CD8-positive, alpha-beta memory T cell (primary cell): ENCODE measurements at regions of chr22 and their contacts with region 1.

Region 1: GRCh38 chr22:37199103-37199759 is 11.2 kb upstream of the C1QTNF6 start:
- DNase-seq: peak; percentile 98 to 99 (median 99)
- H3K4me3 ChIP-seq: peak overlapping the region; percentile 82
- H3K4me3 Mint-ChIP-seq: peak overlapping the region; percentile 81 to 92 (median 84)
- H3K27ac ChIP-seq: peak overlapping the region; percentile 84
- H3K27ac Mint-ChIP-seq: peak overlapping the region; percentile 85 to 97 (median 96)
- H3K4me1 ChIP-seq: peaks cover 42% of the 10 kb centered on the region
- H3K4me1 Mint-ChIP-seq: peaks cover 33 to 51% (median 38%) of the 10 kb centered on the region in 3 donors
- H3K27me3 ChIP-seq: no peaks in the 10 kb centered on the region
- H3K27me3 Mint-ChIP-seq: no peaks in the 10 kb centered on the region

Region 2: DNA sequence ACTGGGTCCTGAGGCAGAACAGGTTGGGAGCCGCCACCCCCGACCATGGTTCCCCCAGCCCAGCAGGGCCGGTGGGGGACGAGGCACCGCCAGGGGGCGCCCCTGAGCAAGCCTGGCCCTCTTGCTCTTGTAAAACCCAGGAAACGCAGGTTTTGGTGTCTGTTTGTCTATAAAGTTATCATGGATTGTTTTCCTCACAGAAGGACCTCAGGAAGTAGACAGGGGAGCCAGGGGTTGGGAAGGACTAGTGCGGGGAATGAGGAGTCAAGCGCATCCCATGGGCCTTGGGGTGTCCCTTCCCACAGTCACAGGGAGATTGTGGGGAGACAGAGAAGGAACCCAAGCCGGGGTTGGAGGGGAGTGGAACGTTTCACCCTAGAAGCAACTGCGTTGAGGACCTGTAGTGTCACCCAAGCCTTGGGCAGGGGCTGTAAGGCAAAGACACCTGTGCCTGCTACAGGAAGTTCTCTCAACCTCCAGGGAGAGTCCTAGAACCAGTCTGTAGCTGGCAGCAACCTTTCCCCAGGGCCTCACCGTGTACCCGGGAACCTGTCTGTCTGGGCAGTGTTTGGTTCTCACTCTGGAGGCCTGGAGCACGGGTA is 121.2 kb before region 1 on chr22:
- CTCF ChIA-PET with region 1: interaction called, 36 read pairs
- POLR2A ChIA-PET with region 1: interaction called, 7 read pairs
- DNase-seq: peak; percentile 74 to 87 (median 79)
- H3K4me3 ChIP-seq: no peak overlapping the region
- H3K4me3 Mint-ChIP-seq: peak overlapping the region in 6 of 7 donors; percentile 13 to 66 (median 37)
- H3K27ac ChIP-seq: no peak overlapping the region
- H3K27ac Mint-ChIP-seq: peak overlapping the region; percentile 81 to 100 (median 98)
- H3K4me1 ChIP-seq: peaks cover 38% of the 10 kb centered on the region
- H3K4me1 Mint-ChIP-seq: peaks cover 29 to 41% (median 31%) of the 10 kb centered on the region in 3 donors
- H3K27me3 ChIP-seq: no peaks in the 10 kb centered on the region
- H3K27me3 Mint-ChIP-seq: peaks cover 3 to 10% of the 10 kb centered on the region in 2 donors

Region 3: GRCh38 chr22:37148742-37149665 is 50.2 kb before region 1 on chr22:
- CTCF ChIA-PET with region 1: interaction called, 17 read pairs
- POLR2A ChIA-PET with region 1: interaction called, 8 read pairs
- DNase-seq: no peak
- H3K4me3 ChIP-seq: peak overlapping the region; percentile 86
- H3K4me3 Mint-ChIP-seq: peak overlapping the region; percentile 88 to 97 (median 96)
- H3K27ac ChIP-seq: peak overlapping the region; percentile 88
- H3K27ac Mint-ChIP-seq: peak overlapping the region; percentile 96 to 100 (median 98)
- H3K4me1 ChIP-seq: peaks cover 67% of the 10 kb centered on the region
- H3K4me1 Mint-ChIP-seq: peaks cover 62 to 70% (median 65%) of the 10 kb centered on the region in 3 donors
- H3K27me3 ChIP-seq: no peaks in the 10 kb centered on the region
- H3K27me3 Mint-ChIP-seq: peaks cover 0 to 4% of the 10 kb centered on the region in 2 donors

Region 4: DNA sequence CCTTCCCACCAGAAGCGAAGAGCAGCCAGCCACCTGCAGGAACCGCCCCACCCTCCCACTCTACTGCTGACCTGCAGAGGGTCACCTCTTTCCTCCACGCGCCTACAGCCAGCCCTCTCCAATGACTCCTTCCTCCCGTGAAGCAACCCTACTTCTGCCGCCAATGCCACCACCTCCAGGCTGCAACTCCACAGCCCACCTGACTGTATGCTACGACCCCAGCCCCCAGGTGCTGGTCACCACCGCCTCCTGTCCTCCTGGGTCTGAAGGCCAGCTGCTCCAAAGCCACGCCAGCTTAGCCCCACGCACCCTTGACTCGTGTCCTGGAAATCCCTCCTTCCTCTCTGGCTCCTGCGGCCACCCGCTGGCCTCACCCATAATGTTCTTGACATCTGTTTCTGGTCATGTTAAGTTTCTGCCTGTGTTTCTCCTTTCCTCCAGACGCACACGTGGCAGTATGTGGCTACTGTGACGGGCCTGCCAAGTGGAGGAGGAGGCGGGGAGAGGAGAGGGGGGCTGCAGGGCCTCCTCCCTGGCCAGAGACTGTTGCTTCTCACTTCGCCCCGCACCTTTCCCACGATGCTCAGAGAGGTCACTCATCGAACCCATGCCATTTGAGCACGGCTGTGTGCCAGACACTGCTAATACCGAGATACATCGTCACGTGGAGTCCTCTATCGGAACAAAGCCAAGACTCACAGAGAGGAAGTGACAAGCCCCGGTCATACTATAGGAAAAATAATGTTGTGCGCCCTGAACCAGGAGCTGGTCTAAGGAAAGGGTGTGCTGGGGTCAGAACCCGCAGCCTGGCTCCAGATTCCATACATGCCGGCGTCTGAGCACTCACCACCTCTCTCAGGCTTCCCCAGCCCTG is 22.8 kb before region 1 on chr22:
- CTCF ChIA-PET with region 1: interaction called, 10 read pairs
- POLR2A ChIA-PET with region 1: interaction called, 6 read pairs
- DNase-seq: no peak
- H3K4me3 ChIP-seq: no peak overlapping the region
- H3K4me3 Mint-ChIP-seq: no peak overlapping the region
- H3K27ac ChIP-seq: no peak overlapping the region
- H3K27ac Mint-ChIP-seq: peak overlapping the region in 6 of 8 donors; percentile 43 to 94 (median 84)
- H3K4me1 ChIP-seq: peaks cover 6% of the 10 kb centered on the region
- H3K4me1 Mint-ChIP-seq: peaks cover 29 to 63% (median 45%) of the 10 kb centered on the region in 3 donors
- H3K27me3 ChIP-seq: no peaks in the 10 kb centered on the region
- H3K27me3 Mint-ChIP-seq: peaks cover 0 to 8% of the 10 kb centered on the region in 2 donors

Region 5: DNA sequence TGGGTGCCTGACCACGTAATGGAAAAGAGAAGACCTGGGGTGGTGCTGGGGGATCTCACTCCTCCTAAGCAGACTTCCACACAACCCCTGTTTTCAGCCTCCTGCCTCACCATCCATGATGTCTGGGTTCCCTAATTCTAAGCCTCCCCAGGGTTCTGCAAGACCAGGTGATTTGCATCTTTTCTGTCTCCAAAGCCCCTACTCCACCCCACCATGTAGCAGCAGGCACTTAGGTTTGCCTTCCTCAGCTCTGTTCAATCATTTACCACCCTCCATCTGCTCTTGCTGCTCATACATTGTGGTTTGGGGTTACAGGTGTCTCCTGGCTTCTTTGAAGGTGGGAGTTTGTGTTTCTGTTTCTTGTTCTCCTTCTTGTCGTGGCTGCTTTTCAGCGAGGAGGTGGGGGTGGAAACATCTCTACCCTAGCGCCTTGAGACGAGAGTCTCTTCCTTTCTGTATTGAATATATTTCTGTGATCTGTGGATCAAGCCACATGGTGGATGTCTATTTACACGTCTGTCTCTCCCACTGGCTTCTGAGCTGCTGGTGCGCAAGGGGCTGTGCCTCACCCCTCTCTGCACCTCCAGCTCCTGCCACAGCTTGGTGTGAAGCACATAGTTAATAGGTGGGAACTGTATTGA is 19.7 kb after region 1 on chr22:
- CTCF ChIA-PET with region 1: interaction called, 31 read pairs
- POLR2A ChIA-PET with region 1: interaction called, 12 read pairs
- DNase-seq: peak; percentile 36 to 94 (median 86)
- H3K4me3 ChIP-seq: peak overlapping the region; percentile 53
- H3K4me3 Mint-ChIP-seq: peak overlapping the region; percentile 6 to 68 (median 61)
- H3K27ac ChIP-seq: no peak overlapping the region
- H3K27ac Mint-ChIP-seq: peak overlapping the region; percentile 46 to 99 (median 94)
- H3K4me1 ChIP-seq: peaks cover 76% of the 10 kb centered on the region
- H3K4me1 Mint-ChIP-seq: peaks cover 63 to 83% (median 76%) of the 10 kb centered on the region in 3 donors
- H3K27me3 ChIP-seq: no peaks in the 10 kb centered on the region
- H3K27me3 Mint-ChIP-seq: no peaks in the 10 kb centered on the region

Region 6: DNA sequence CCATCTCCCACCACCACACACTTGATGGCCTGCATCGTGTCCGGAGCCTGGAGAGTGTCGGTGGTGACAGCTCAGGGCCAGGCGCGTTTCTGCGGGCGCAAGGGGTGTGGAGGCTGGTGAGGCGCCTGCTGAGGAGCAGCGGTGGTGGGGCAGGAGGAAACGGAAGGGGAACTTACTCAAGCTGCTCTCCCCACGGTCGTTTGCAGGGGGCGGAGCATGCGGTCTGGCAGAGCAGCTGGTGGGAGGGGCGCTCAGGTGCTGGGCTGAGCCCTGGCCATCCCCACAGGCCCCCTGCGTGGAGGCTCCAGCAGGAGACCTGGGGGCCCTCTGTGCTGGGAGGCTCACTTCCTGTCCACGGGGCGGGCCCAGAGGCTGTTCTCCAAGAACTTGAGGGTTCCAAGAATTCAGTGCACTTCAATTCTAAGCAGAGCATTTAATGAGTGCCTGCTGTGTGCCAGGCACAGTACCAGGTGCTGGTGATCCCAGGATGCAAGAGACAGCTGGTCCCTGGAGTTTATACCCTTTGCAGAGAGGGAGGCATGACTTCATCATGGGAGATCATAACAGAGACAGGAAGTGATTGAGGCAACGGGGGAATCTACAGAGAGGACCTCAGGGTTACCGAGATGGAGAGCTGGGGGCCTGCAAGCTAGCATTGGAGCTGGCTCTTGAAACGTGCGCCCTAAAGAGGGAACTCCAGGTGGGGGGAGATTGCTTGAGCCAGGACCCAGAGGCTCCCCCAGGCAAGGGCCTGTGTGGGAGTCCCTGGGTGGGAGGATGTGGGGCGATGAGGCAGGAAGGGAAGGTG is 45.1 kb after region 1 on chr22 and contains the start of gene RAC2:
- CTCF ChIA-PET with region 1: interaction called, 76 read pairs
- POLR2A ChIA-PET with region 1: interaction called, 4 read pairs
- DNase-seq: peak; percentile 77 to 93 (median 83)
- H3K4me3 ChIP-seq: peak within 1 kb of the TSS; percentile 100
- H3K4me3 Mint-ChIP-seq: peak within 1 kb of the TSS; percentile 88 to 98 (median 93)
- H3K27ac ChIP-seq: peak within 1 kb of the TSS; percentile 91
- H3K27ac Mint-ChIP-seq: peak within 1 kb of the TSS; percentile 79 to 100 (median 98)
- H3K4me1 ChIP-seq: peaks cover 48% of the 10 kb centered on the region
- H3K4me1 Mint-ChIP-seq: peaks cover 49 to 58% (median 50%) of the 10 kb centered on the region in 3 donors
- H3K27me3 ChIP-seq: no peaks in the 10 kb centered on the region
- H3K27me3 Mint-ChIP-seq: no peaks in the 10 kb centered on the region
- total RNA-seq, gene RAC2: 433 to 452 TPM

Region 7: GRCh38 chr22:37832022-37832857 is 633.0 kb after region 1 on chr22:
- CTCF ChIA-PET with region 1: no interaction called
- POLR2A ChIA-PET with region 1: no interaction called
- DNase-seq: no peak
- H3K4me3 ChIP-seq: no peak overlapping the region
- H3K4me3 Mint-ChIP-seq: no peak overlapping the region
- H3K27ac ChIP-seq: no peak overlapping the region
- H3K27ac Mint-ChIP-seq: peak overlapping the region in 1 of 8 donors; percentile 9
- H3K4me1 ChIP-seq: no peaks in the 10 kb centered on the region
- H3K4me1 Mint-ChIP-seq: no peaks in the 10 kb centered on the region
- H3K27me3 ChIP-seq: no peaks in the 10 kb centered on the region
- H3K27me3 Mint-ChIP-seq: no peaks in the 10 kb centered on the region